Common myeloid progenitor, CD34-positive (primary cell): ENCODE measurements at regions of chr12 and their contacts with region 1.

Region 1: DNA sequence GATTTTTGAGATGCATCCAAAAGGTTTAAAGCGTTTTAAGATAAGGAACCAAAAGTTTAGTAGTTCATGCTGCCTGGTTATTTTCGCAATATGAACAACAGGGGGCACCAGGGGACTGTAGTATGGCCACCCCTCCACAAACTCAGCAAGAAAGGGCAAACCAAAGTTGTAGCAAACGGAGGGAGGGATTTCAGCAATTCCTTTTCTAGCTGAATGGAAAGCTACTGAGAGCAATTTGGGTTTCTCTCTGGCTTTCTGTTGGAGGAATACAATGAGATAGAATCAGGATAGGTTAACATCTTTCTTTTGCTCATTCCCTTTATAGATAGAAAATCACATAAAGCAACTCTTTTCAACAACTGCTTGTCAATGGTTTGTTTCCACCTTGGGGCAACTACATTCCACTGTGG is 62.5 kb downstream of the DRAM1 start:
- DNase-seq: peak; percentile 73 to 88 (median 84)
- H3K4me3 ChIP-seq: no peak overlapping the region
- H3K27ac ChIP-seq: no peak overlapping the region
- H3K4me1 ChIP-seq: peaks cover 0 to 23% (median 11%) of the 10 kb centered on the region in 4 experiments
- H3K27me3 ChIP-seq: no peaks in the 10 kb centered on the region

Region 2: DNA sequence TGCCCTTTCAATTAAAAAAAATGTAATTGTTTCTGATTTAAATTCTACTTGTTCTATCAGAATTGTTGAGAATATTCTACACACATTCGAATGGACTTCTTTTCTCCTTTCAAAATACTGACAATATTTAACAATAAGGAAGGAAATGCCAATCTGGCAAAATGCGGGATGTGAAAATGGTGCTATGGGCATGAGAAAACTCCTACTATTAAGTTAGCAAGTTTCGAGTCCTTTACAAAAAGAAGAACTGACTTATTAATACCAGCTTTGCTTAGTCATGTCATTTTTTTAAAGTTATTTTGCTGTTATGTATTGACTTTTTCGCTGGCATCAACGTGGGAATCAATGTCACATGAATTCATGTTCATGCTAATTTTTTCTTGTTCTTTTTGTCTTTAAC is 500.6 kb before region 1 on chr12:
- CTCF ChIA-PET with region 1: no interaction called
- POLR2A ChIA-PET with region 1: no interaction called
- DNase-seq: peak in 2 of 3 donors; percentile 12 to 19
- H3K4me3 ChIP-seq: no peak overlapping the region
- H3K27ac ChIP-seq: no peak overlapping the region
- H3K4me1 ChIP-seq: peaks cover 0 to 6% (median 0%) of the 10 kb centered on the region in 4 experiments
- H3K27me3 ChIP-seq: no peaks in the 10 kb centered on the region

Region 3: GRCh38 chr12:102740141-102740955 is 800.5 kb after region 1 on chr12:
- CTCF ChIA-PET with region 1: interaction called, 21 read pairs
- POLR2A ChIA-PET with region 1: no interaction called
- DNase-seq: peak; percentile 16 to 36 (median 33)
- H3K4me3 ChIP-seq: no peak overlapping the region
- H3K27ac ChIP-seq: no peak overlapping the region
- H3K4me1 ChIP-seq: peaks cover 0 to under 1% (median 0%) of the 10 kb centered on the region in 4 experiments
- H3K27me3 ChIP-seq: no peaks in the 10 kb centered on the region